ENCODE measurements at regions of chr13 and their contacts with region 1.

Region 1: DNA sequence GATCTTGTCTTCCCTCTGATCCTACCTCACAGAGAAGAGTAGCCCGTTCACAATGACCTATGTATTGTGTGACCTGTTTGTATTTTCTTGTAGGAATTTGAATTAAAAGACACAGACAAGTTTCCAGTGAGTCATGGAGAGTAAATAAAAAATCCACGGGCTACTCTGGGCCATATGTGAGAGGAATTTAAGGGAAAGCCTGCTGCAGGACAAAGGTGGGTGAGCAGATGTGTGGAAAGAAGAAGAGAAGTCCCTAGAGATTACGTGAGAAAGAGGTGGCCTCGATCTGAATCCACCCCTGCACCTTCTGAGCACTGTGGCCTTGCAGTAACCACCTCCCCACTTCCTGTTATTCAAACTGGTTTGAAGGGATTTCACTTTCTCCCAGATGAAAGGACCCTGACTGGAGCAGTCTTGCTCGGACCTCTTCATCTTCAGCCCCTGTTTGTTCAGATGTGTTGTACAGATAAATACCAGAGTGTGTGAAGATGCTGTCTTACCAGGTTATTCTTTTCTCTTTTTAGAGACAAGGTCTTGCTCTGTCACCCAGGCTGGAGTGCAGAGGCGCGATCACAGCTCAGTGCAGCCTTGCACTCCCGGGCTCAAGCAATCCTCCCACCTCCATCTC is 205.4 kb downstream of the PDS5B start:
- DNase-seq: no peak
- H3K4me3 ChIP-seq: no peak overlapping the region
- H3K27ac ChIP-seq: no peak overlapping the region
- H3K4me1 ChIP-seq: no peaks in the 10 kb centered on the region
- H3K27me3 ChIP-seq: no peaks in the 10 kb centered on the region
- CTCF ChIP-seq: no peak

Region 2: DNA sequence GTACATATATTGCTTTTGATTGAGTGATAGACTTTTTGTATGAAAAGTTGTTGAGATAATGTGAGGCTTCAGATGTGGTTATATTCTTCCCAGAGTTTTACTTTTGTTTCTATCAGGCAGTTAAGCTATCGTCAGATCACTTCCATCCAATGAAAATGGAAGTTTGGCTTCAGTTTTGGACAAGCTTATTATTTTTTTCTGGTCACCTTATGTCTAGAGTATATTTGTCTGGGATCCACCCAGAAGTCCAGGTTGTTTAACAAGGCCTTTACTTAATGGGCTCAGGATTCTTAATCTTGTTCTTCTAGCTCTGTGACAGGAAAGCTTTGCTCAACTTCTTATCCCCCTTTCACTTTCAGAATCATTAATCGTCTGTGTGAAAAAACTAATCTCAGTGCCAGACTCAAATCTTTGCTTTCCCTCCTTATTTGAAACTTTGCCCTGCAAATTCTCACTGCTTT is 54.5 kb before region 1 on chr13:
- CTCF ChIA-PET with region 1: no interaction called
- dilution Hi-C with region 1: no loop called
- in situ Hi-C with region 1: no loop called
- intact Hi-C with region 1: no loop called
- DNase-seq: no peak
- H3K4me3 ChIP-seq: no peak overlapping the region
- H3K27ac ChIP-seq: no peak overlapping the region
- H3K4me1 ChIP-seq: peaks cover 6% of the 10 kb centered on the region
- H3K27me3 ChIP-seq: no peaks in the 10 kb centered on the region
- CTCF ChIP-seq: no peak

Region 3: DNA sequence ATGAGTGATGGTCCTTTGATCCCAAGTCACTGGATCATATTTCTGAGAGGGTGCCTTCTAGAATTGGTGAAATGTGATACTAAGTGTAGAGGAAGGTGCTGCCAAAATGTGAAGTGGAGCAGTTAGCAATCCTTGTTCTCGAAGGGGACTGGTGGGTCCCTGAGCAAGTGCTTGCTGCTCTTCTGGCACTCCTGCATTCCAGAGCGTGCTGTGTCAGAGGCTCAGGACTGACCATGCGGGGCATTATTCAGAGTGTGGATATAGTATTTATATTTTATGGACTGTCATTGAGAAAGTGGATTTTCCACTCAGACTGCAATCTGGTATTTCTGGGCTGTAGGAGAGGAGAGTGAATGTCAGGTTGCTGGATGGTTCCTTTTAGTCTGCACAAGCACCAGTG is 71.9 kb after region 1 on chr13:
- CTCF ChIA-PET with region 1: no interaction called
- dilution Hi-C with region 1: loop called (anchors 5 kb)
- in situ Hi-C with region 1: no loop called
- intact Hi-C with region 1: loop called (anchors 10 kb)
- DNase-seq: no peak
- H3K4me3 ChIP-seq: no peak overlapping the region
- H3K27ac ChIP-seq: no peak overlapping the region
- H3K4me1 ChIP-seq: no peaks in the 10 kb centered on the region
- H3K27me3 ChIP-seq: peaks cover 7% of the 10 kb centered on the region
- CTCF ChIP-seq: no peak

Measured in mammary epithelial cell (primary cell).